ENCODE measurements at regions of chr14 and their contacts with region 1.

Region 1: DNA sequence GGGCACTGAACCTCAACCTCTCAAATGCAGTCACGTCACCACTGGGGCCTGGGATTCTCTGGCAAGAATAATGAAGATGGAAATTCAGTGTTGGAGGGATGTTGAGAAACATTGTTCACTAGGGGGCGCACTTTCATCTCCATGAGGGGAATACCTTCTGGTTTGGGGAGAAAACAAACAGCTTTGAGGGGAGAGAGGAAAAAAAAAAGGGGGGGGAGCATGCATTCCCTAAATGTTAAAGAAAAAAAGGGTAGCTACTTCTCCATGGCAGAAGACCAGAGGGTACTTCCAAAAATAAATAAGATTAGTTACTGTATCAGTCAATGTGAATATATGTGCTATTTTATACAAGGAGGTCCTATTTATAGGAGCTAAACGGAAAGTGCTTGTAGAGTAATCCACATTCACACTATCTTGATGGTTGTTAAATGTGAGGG is 5.8 kb upstream of the TBPL2 start:
- DNase-seq: peak; percentile 86
- ATAC-seq: peak; percentile 38
- H3K4me3 ChIP-seq: no peak overlapping the region
- H3K27ac ChIP-seq: no peak overlapping the region
- H3K4me1 ChIP-seq: peaks cover 8% of the 10 kb centered on the region
- H3K27me3 ChIP-seq: no peaks in the 10 kb centered on the region
- CTCF ChIP-seq: peak; percentile 72
- POLR2A ChIP-seq: no peak; the same call in 1 of the 2 replicates
- RAD21 ChIP-seq: peak; percentile 75

Region 2: GRCh38 chr14:55579724-55580469 is 133.7 kb after region 1 on chr14 and contains the start of gene KTN1:
- CTCF ChIA-PET with region 1: no interaction called
- POLR2A ChIA-PET with region 1: interaction called, 14 read pairs
- dilution Hi-C with region 1: no loop called
- in situ Hi-C with region 1: no loop called
- intact Hi-C with region 1: loop called (anchors 2 kb)
- DNase-seq: peak; percentile 71
- ATAC-seq: peak; percentile 90
- H3K4me3 ChIP-seq: peak within 1 kb of the TSS; percentile 98
- H3K27ac ChIP-seq: peak within 1 kb of the TSS; percentile 97
- H3K4me1 ChIP-seq: peaks cover 12% of the 10 kb centered on the region
- H3K27me3 ChIP-seq: no peaks in the 10 kb centered on the region
- CTCF ChIP-seq: no peak
- POLR2A ChIP-seq: peak; percentile 18; the same call in 1 of the 2 replicates
- RAD21 ChIP-seq: no peak
- total RNA-seq, gene KTN1: 57.2 and 149 TPM in 2 replicates

Region 3: GRCh38 chr14:55585854-55586253 is 139.6 kb after region 1 on chr14:
- CTCF ChIA-PET with region 1: no interaction called
- POLR2A ChIA-PET with region 1: interaction called, 14 read pairs
- dilution Hi-C with region 1: no loop called
- in situ Hi-C with region 1: no loop called
- intact Hi-C with region 1: loop called (anchors 2 kb)
- DNase-seq: peak; percentile 73
- ATAC-seq: peak; percentile 25
- H3K4me3 ChIP-seq: no peak overlapping the region
- H3K27ac ChIP-seq: no peak overlapping the region
- H3K4me1 ChIP-seq: peaks cover 15% of the 10 kb centered on the region
- H3K27me3 ChIP-seq: no peaks in the 10 kb centered on the region
- CTCF ChIP-seq: no peak
- POLR2A ChIP-seq: no peak
- RAD21 ChIP-seq: no peak

Region 4: GRCh38 chr14:56046546-56046945 is 600.3 kb after region 1 on chr14:
- CTCF ChIA-PET with region 1: no interaction called
- POLR2A ChIA-PET with region 1: no interaction called
- dilution Hi-C with region 1: no loop called
- in situ Hi-C with region 1: no loop called
- intact Hi-C with region 1: no loop called
- DNase-seq: no peak
- ATAC-seq: no peak
- H3K4me3 ChIP-seq: no peak overlapping the region
- H3K27ac ChIP-seq: no peak overlapping the region
- H3K4me1 ChIP-seq: no peaks in the 10 kb centered on the region
- H3K27me3 ChIP-seq: peaks cover 17% of the 10 kb centered on the region
- CTCF ChIP-seq: no peak
- POLR2A ChIP-seq: no peak
- RAD21 ChIP-seq: no peak

Measured in IMR-90 (cell line).